CD8-positive, alpha-beta T cell (primary cell): ENCODE measurements at regions of chr16 and their contacts with region 1.

Region 1: GRCh38 chr16:84663433-84664101 is 15.3 kb downstream of the KLHL36 start:
- DNase-seq: no peak
- ATAC-seq: no peak
- H3K4me3 ChIP-seq: no peak overlapping the region
- H3K4me3 Mint-ChIP-seq: no peak overlapping the region
- H3K27ac ChIP-seq: no peak overlapping the region
- H3K27ac Mint-ChIP-seq: no peak overlapping the region
- H3K4me1 ChIP-seq: peaks cover 4% of the 10 kb centered on the region
- H3K4me1 Mint-ChIP-seq: peaks cover 18% of the 10 kb centered on the region
- H3K27me3 ChIP-seq: no peaks in the 10 kb centered on the region
- H3K27me3 Mint-ChIP-seq: no peaks in the 10 kb centered on the region
- CTCF ChIP-seq: no peak

Region 2: GRCh38 chr16:83779886-83780285 is 883.7 kb before region 1 on chr16:
- CTCF ChIA-PET with region 1: no interaction called
- POLR2A ChIA-PET with region 1: no interaction called
- intact Hi-C with region 1: no loop called
- DNase-seq: no peak
- ATAC-seq: no peak
- H3K4me3 ChIP-seq: no peak overlapping the region
- H3K4me3 Mint-ChIP-seq: no peak overlapping the region
- H3K27ac ChIP-seq: no peak overlapping the region
- H3K27ac Mint-ChIP-seq: no peak overlapping the region
- H3K4me1 ChIP-seq: no peaks in the 10 kb centered on the region
- H3K4me1 Mint-ChIP-seq: no peaks in the 10 kb centered on the region
- H3K27me3 ChIP-seq: peaks cover 0 to 4% of the 10 kb centered on the region in 2 experiments
- H3K27me3 Mint-ChIP-seq: peaks cover 4% of the 10 kb centered on the region
- CTCF ChIP-seq: no peak

Region 3: GRCh38 chr16:84544031-84544773 is 119.4 kb before region 1 on chr16:
- CTCF ChIA-PET with region 1: no interaction called
- POLR2A ChIA-PET with region 1: no interaction called
- intact Hi-C with region 1: no loop called
- DNase-seq: peak in 7 of 9 experiments; percentile 17 to 62 (median 33)
- ATAC-seq: no peak
- H3K4me3 ChIP-seq: no peak overlapping the region
- H3K4me3 Mint-ChIP-seq: peak overlapping the region; percentile 51
- H3K27ac ChIP-seq: no peak overlapping the region
- H3K27ac Mint-ChIP-seq: peak overlapping the region; percentile 68
- H3K4me1 ChIP-seq: peaks cover 28% of the 10 kb centered on the region
- H3K4me1 Mint-ChIP-seq: peaks cover 35% of the 10 kb centered on the region
- H3K27me3 ChIP-seq: no peaks in the 10 kb centered on the region
- H3K27me3 Mint-ChIP-seq: no peaks in the 10 kb centered on the region
- CTCF ChIP-seq: no peak

Region 4: GRCh38 chr16:84593825-84594724 is 69.5 kb before region 1 on chr16:
- CTCF ChIA-PET with region 1: no interaction called
- POLR2A ChIA-PET with region 1: no interaction called
- intact Hi-C with region 1: no loop called
- DNase-seq: peak; percentile 69 to 98 (median 84)
- ATAC-seq: peak; percentile 85
- H3K4me3 ChIP-seq: peak overlapping the region; percentile 37 to 46
- H3K4me3 Mint-ChIP-seq: peak overlapping the region; percentile 83
- H3K27ac ChIP-seq: peak overlapping the region; percentile 75 to 94
- H3K27ac Mint-ChIP-seq: peak overlapping the region; percentile 98
- H3K4me1 ChIP-seq: peaks cover 59% of the 10 kb centered on the region
- H3K4me1 Mint-ChIP-seq: peaks cover 72% of the 10 kb centered on the region
- H3K27me3 ChIP-seq: no peaks in the 10 kb centered on the region
- H3K27me3 Mint-ChIP-seq: no peaks in the 10 kb centered on the region
- CTCF ChIP-seq: no peak

Region 5: GRCh38 chr16:84633622-84634021 is 29.9 kb before region 1 on chr16:
- CTCF ChIA-PET with region 1: interaction called, 3 read pairs
- POLR2A ChIA-PET with region 1: interaction called, 3 read pairs
- intact Hi-C with region 1: loop called in 1 of 2 experiments (anchors 5 kb)
- DNase-seq: no peak
- ATAC-seq: no peak
- H3K4me3 ChIP-seq: no peak overlapping the region
- H3K4me3 Mint-ChIP-seq: no peak overlapping the region
- H3K27ac ChIP-seq: no peak overlapping the region
- H3K27ac Mint-ChIP-seq: no peak overlapping the region
- H3K4me1 ChIP-seq: peaks cover 34% of the 10 kb centered on the region
- H3K4me1 Mint-ChIP-seq: peaks cover 32% of the 10 kb centered on the region
- H3K27me3 ChIP-seq: no peaks in the 10 kb centered on the region
- H3K27me3 Mint-ChIP-seq: no peaks in the 10 kb centered on the region
- CTCF ChIP-seq: no peak